Activated CD8-positive, alpha-beta T cell treated with anti-CD3 and anti-CD28 coated beads, Interleukin-2, amount 10 ng/mL, durations not matched to agents 7 days and 5 days (primary cell): ENCODE measurements at regions of chr20 and their contacts with region 1.

Region 1: GRCh38 chr20:46132705-46133120 is 14.6 kb downstream of the CD40 start:
- DNase-seq: peak; percentile 69
- ATAC-seq: peak; percentile 91
- H3K4me3 Mint-ChIP-seq: no peak overlapping the region
- H3K27ac Mint-ChIP-seq: no peak overlapping the region
- H3K4me1 Mint-ChIP-seq: no peaks in the 10 kb centered on the region
- H3K27me3 Mint-ChIP-seq: peaks cover 20% of the 10 kb centered on the region

Region 2: DNA sequence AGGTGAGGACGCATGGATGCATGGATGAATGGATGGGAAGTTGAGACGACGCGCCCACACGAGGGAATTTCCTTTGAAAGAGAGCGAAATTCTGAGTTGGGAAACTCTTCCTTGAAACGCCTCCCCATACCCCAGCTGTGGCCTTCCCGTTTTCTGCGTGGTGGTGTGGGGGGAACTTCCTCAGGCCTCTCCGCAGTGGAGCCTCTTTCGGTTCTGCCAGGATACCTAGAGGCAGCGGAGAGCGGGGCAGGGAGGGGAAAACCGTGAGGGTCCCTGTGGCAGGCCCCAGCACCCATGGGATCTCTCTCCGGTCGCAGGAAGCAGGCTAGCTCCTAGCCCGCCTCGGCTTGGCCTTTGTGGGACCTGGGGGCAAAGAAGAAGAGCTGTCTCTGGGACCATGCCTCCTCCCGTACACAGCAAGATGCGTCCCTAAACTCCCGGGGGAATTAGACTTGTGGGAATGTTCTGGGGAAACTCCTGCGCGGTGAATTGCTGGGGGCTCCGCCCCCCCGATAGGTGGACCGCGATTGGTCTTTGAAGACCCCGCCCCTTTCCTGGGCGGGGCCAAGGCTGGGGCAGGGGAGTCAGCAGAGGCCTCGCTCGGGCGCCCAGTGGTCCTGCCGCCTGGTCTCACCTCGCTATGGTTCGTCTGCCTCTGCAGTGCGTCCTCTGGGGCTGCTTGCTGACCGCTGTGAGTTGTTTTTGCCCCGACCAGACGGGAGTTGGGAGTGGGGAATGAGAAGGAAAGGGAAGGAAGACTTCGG is 14.8 kb before region 1 on chr20 and contains the start of gene CD40:
- CTCF ChIA-PET with region 1: interaction called, 10 read pairs
- POLR2A ChIA-PET with region 1: no interaction called
- DNase-seq: peak; percentile 58
- ATAC-seq: peak; percentile 84
- H3K4me3 Mint-ChIP-seq: peak within 1 kb of the TSS; percentile 79
- H3K27ac Mint-ChIP-seq: no peak within 1 kb of the TSS
- H3K4me1 Mint-ChIP-seq: peaks cover 17% of the 10 kb centered on the region
- H3K27me3 Mint-ChIP-seq: peaks cover 26% of the 10 kb centered on the region
- total RNA-seq, gene CD40: 0.94 to 1.0 TPM

Region 3: GRCh38 chr20:46174469-46175128 is 41.9 kb after region 1 on chr20:
- CTCF ChIA-PET with region 1: interaction called, 22 read pairs
- POLR2A ChIA-PET with region 1: no interaction called
- DNase-seq: peak; percentile 77
- ATAC-seq: peak; percentile 97
- H3K4me3 Mint-ChIP-seq: no peak overlapping the region
- H3K27ac Mint-ChIP-seq: no peak overlapping the region
- H3K4me1 Mint-ChIP-seq: no peaks in the 10 kb centered on the region
- H3K27me3 Mint-ChIP-seq: peaks cover 37% of the 10 kb centered on the region